K562 (cell line): ENCODE measurements at regions of chr2 and their contacts with region 1.

Region 1: GRCh38 chr2:177348733-177349693 is 43.6 kb upstream of the AGPS start:
- DNase-seq: no peak
- ATAC-seq: no peak
- H3K4me3 ChIP-seq: no peak overlapping the region
- H3K27ac ChIP-seq: no peak overlapping the region; the same call in 2 of the 3 replicates
- H3K4me1 ChIP-seq: no peaks in the 10 kb centered on the region
- H3K27me3 ChIP-seq: no peaks in the 10 kb centered on the region
- CTCF ChIP-seq: no peak
- EP300 ChIP-seq: no peak
- POLR2A ChIP-seq: no peak
- RAD21 ChIP-seq: no peak

Region 2: GRCh38 chr2:176967911-176968450 is 381.0 kb before region 1 on chr2:
- CTCF ChIA-PET with region 1: no interaction called
- POLR2A ChIA-PET with region 1: no interaction called
- in situ Hi-C with region 1: no loop called
- intact Hi-C with region 1: no loop called
- DNase-seq: no peak
- ATAC-seq: no peak
- H3K4me3 ChIP-seq: no peak overlapping the region
- H3K27ac ChIP-seq: no peak overlapping the region
- H3K4me1 ChIP-seq: no peaks in the 10 kb centered on the region
- H3K27me3 ChIP-seq: no peaks in the 10 kb centered on the region
- CTCF ChIP-seq: no peak
- EP300 ChIP-seq: no peak
- POLR2A ChIP-seq: no peak
- RAD21 ChIP-seq: no peak

Region 3: DNA sequence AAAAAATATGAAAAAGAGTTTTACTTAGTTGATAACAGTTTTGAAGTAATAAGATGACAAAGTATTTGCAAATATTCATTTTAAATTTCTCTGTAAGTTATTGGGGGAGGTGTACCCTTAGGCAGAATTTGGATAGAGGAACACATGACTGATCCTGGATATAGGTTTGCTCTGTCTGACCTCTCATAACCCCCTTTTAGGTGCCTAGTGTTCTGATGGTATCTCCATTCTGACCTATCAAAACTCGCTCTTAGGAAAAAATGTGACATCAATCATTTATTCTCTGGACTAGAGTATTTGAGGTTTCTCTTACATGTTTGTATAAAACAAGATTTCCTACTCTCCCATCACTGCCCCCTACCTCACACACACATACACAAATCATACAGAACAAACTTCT is 26.6 kb after region 1 on chr2:
- CTCF ChIA-PET with region 1: no interaction called
- POLR2A ChIA-PET with region 1: no interaction called
- in situ Hi-C with region 1: no loop called
- intact Hi-C with region 1: no loop called
- DNase-seq: no peak
- ATAC-seq: no peak
- H3K4me3 ChIP-seq: no peak overlapping the region
- H3K27ac ChIP-seq: no peak overlapping the region
- H3K4me1 ChIP-seq: no peaks in the 10 kb centered on the region
- H3K27me3 ChIP-seq: no peaks in the 10 kb centered on the region
- CTCF ChIP-seq: no peak
- EP300 ChIP-seq: no peak
- POLR2A ChIP-seq: no peak
- RAD21 ChIP-seq: no peak

Region 4: GRCh38 chr2:177429688-177430325 is 80.8 kb after region 1 on chr2:
- CTCF ChIA-PET with region 1: no interaction called
- POLR2A ChIA-PET with region 1: no interaction called
- in situ Hi-C with region 1: loop called (anchors 5 kb)
- intact Hi-C with region 1: no loop called
- DNase-seq: no peak
- ATAC-seq: no peak
- H3K4me3 ChIP-seq: no peak overlapping the region
- H3K27ac ChIP-seq: no peak overlapping the region
- H3K4me1 ChIP-seq: no peaks in the 10 kb centered on the region
- H3K27me3 ChIP-seq: no peaks in the 10 kb centered on the region
- CTCF ChIP-seq: no peak
- EP300 ChIP-seq: no peak
- POLR2A ChIP-seq: no peak
- RAD21 ChIP-seq: no peak